Body of pancreas (tissue), 4 donors: ENCODE measurements at regions of chr1 and their contacts with region 1.

Region 1: GRCh38 chr1:111789666-111790316 is 34.1 kb downstream of the DDX20 start:
- DNase-seq: peak in 1 of 4 donors; percentile 22
- ATAC-seq: peak; percentile 56
- H3K4me3 ChIP-seq: no peak overlapping the region
- H3K27ac ChIP-seq: no peak overlapping the region
- H3K4me1 ChIP-seq: peaks cover 5% of the 10 kb centered on the region
- H3K27me3 ChIP-seq: no peaks in the 10 kb centered on the region
- CTCF ChIP-seq: peak in 4 of 7 experiments; percentile 16 to 31 (median 23)
- POLR2A ChIP-seq: no peak

Region 2: GRCh38 chr1:111989531-111990025 is 199.8 kb after region 1 on chr1 and contains the start of gene KCND3:
- intact Hi-C with region 1: loop called (anchors 10 kb)
- DNase-seq: peak; percentile 36 to 53 (median 50)
- ATAC-seq: peak; percentile 46
- H3K4me3 ChIP-seq: peak within 1 kb of the TSS; percentile 47 to 58
- H3K27ac ChIP-seq: peak within 1 kb of the TSS; percentile 21 to 83 (median 54)
- H3K4me1 ChIP-seq: peaks cover 38% of the 10 kb centered on the region
- H3K27me3 ChIP-seq: no peaks in the 10 kb centered on the region
- CTCF ChIP-seq: no peak
- POLR2A ChIP-seq: no peak
- total RNA-seq, gene KCND3: 7.6 to 15.0 TPM